Heart right ventricle (tissue), 16 donors: ENCODE measurements at regions of chr7 and their contacts with region 1.

Region 1: GRCh38 chr7:155584763-155585531 is 38.6 kb upstream of the CNPY1 start:
- DNase-seq: no peak
- ATAC-seq: peak in 5 of 8 donors; percentile 42 to 86 (median 62)
- H3K4me3 ChIP-seq: no peak overlapping the region
- H3K27ac ChIP-seq: no peak overlapping the region
- H3K4me1 ChIP-seq: peaks cover 0 to 3% (median 0%) of the 10 kb centered on the region in 9 donors
- H3K27me3 ChIP-seq: peaks cover 0 to 44% (median 18%) of the 10 kb centered on the region in 7 donors
- CTCF ChIP-seq: no peak

Region 2: GRCh38 chr7:155119801-155120382 is 465.1 kb before region 1 on chr7:
- intact Hi-C with region 1: no loop called
- DNase-seq: no peak
- ATAC-seq: no peak
- H3K4me3 ChIP-seq: no peak overlapping the region
- H3K27ac ChIP-seq: no peak overlapping the region
- H3K4me1 ChIP-seq: no peaks in the 10 kb centered on the region
- H3K27me3 ChIP-seq: peaks cover 0 to 28% (median 7%) of the 10 kb centered on the region in 7 donors
- CTCF ChIP-seq: no peak

Region 3: DNA sequence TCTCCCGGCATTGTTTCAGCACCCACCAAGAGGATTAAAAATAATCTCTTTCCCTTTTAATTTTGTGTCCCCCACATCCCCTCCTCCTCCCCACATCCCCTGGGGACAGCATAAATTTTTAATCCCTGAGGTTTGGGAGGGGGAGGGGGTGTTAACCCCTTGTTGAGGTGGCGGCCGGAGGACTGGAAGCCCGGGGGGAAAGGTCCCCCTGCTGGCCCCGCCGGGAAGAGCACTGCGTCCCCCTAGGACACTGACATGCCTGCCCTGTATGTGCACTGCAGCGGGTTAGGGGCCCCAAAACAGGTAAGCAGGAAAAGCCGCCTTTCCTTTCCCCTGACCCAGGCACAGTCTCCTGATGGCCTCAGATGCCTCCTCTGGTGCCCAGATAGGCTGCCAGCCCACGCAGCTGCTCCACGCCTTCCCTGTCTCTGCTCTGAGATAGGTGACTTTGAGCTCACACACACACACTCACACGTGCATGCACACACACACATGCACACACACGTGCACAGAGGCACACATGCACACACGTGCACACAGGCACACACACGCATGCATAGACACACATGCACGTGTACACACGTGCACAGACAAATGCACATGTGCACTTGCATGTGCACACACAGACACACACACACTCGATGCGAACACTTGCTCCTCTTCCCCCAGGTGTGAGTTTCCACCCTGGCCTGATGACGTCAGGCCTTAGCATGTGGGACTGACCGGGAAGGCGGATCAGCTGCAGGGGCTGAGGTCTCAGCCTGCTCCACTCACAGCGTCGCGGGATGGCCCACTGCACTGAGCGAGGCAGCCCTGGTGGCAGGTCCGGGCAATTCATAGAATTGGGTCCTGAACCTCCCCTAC is 50.9 kb before region 1 on chr7:
- intact Hi-C with region 1: no loop called
- DNase-seq: no peak
- ATAC-seq: peak in 5 of 8 donors; percentile 30 to 63 (median 48)
- H3K4me3 ChIP-seq: peak overlapping the region in 8 of 10 donors; percentile 2 to 34 (median 24)
- H3K27ac ChIP-seq: no peak overlapping the region
- H3K4me1 ChIP-seq: peaks cover 0 to 15% (median 13%) of the 10 kb centered on the region in 9 donors
- H3K27me3 ChIP-seq: peaks cover 15 to 98% (median 87%) of the 10 kb centered on the region in 7 donors
- CTCF ChIP-seq: peak in 8 of 9 donors; percentile 10 to 58 (median 50)

Region 4: GRCh38 chr7:156460858-156461627 is 876.1 kb after region 1 on chr7:
- intact Hi-C with region 1: loop called in 1 of 10 experiments (anchors 10 kb)
- DNase-seq: no peak
- ATAC-seq: no peak
- H3K4me3 ChIP-seq: no peak overlapping the region
- H3K27ac ChIP-seq: no peak overlapping the region
- H3K4me1 ChIP-seq: no peaks in the 10 kb centered on the region
- H3K27me3 ChIP-seq: peaks cover 0 to 44% (median 16%) of the 10 kb centered on the region in 7 donors
- CTCF ChIP-seq: no peak